Endothelial cell of umbilical vein (primary cell): ENCODE measurements at regions of chr14 and their contacts with region 1.

Region 1: DNA sequence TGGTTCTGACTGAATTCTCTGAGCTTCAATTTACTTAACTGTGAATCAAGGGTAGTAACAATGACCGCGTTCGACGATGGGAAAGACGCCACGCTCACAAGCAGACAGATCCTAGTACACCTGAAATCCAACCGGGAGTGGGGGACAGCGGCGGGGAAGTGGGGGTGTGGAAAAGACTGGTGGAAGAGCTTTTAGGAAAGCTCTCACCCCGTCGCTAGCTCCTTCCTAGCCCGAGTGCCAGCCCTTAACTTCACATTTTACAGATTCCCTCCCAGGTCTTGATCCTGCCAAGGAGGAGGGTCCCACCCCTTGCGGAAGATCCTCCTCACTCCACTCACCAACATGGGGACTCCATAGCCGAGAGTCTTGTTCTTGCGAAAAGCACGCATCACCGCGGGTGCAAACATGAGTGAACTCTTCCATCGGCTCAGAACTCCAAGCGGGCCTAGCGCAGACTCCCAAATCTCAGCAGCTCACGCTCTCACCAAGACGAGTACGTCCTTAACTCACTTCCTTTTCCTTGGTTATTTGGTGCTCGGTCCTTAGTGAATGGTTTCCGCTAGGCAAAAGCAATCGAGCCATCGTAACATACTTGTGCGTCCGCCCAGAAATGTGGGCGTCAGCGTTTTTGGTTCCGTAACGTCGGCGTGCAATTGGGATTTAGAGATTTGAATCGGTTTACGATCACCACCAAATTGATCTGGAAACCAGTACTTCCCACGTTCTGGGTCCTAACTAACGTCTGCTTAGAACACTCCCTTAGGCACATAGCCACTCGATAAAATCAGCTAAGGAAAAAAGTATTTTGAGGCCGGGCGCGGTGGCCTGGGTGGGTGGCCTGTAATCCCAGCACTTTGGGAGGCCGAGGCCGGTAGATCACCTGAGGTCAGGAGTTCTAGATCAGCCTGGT is at the start of gene COX16:
- DNase-seq: peak; percentile 96
- H3K4me3 ChIP-seq: peak within 1 kb of the TSS; percentile 46 to 93 (median 58)
- H3K27ac ChIP-seq: peak within 1 kb of the TSS; percentile 45
- H3K4me1 ChIP-seq: peaks cover 12% of the 10 kb centered on the region
- H3K27me3 ChIP-seq: no peaks in the 10 kb centered on the region
- CTCF ChIP-seq: no peak
- POLR2A ChIP-seq: peak; percentile 88
- total RNA-seq, gene COX16: 42.4 and 49.9 TPM in 2 replicates

Region 2: GRCh38 chr14:70188659-70189455 is 170.6 kb before region 1 on chr14 and contains the start of gene SLC8A3:
- CTCF ChIA-PET with region 1: no interaction called
- POLR2A ChIA-PET with region 1: no interaction called
- dilution Hi-C with region 1: no loop called
- intact Hi-C with region 1: loop called (anchors 5 kb)
- DNase-seq: peak; percentile 35
- H3K4me3 ChIP-seq: peak within 1 kb of the TSS; percentile 37 to 59 (median 51)
- H3K27ac ChIP-seq: no peak within 1 kb of the TSS
- H3K4me1 ChIP-seq: peaks cover 19% of the 10 kb centered on the region
- H3K27me3 ChIP-seq: peaks cover 18 to 30% of the 10 kb centered on the region in 2 experiments
- CTCF ChIP-seq: no peak
- POLR2A ChIP-seq: no peak
- total RNA-seq, gene SLC8A3: not detected in 2 replicates

Region 3: DNA sequence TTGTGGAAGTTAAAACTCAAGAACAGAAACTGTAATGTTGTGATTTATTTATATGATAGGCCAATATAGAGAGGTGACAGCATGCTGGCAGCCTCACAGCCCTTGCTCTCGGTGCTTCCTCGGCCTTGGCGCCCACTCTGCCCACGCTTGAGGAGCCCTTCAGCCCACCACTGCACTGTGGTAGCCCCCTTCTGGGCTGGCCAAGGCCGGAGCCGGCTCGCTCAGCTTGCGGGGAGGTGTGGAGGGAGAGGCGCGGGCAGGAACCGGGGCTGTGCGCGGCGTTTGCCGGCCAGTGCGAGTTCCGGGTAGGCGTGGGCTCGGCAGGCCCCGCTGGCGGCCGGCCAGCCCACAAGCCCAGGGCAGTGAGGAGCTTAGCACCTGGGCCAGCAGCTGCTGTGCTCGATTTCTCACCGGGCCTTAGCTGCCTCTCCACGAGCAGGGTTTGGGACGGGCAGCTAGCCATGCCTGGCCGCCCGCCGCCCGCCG is 104.9 kb before region 1 on chr14:
- CTCF ChIA-PET with region 1: no interaction called
- POLR2A ChIA-PET with region 1: no interaction called
- dilution Hi-C with region 1: no loop called
- intact Hi-C with region 1: loop called (anchors 2 kb)
- DNase-seq: peak; percentile 30
- H3K4me3 ChIP-seq: peak overlapping the region; percentile 16 to 46 (median 43)
- H3K27ac ChIP-seq: no peak overlapping the region
- H3K4me1 ChIP-seq: no peaks in the 10 kb centered on the region
- H3K27me3 ChIP-seq: peaks cover 2 to 6% of the 10 kb centered on the region in 2 experiments
- CTCF ChIP-seq: no peak
- POLR2A ChIP-seq: no peak

Region 4: DNA sequence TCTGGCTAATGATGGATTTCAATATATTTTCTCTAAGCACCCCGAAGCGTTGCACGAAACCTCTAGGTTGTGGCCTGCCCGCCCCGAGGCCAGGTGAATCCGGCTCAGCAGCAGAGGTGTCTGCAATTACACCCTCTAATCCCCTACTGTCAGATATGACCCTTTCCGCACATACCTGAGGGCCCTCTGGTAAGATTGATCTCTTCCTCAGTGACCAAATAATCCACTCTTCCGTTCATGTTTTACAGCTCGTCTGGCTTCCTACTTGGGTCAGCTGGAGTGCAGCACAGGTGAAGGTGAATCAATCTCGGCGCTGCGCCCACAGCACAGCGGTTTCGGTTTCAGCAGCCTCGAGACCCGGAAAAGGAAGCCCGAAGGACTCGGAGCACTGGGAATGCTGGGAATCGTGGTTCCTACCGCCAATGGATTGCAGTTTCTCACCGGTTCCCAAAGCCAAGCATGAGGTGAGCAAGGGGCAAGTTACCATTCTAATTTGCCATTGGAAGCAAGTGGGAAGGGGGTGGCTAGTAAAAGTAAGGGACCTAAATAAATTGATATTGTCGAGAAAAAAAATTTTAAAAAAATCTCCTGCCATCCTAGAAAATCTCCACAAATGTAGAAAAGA is 57.4 kb after region 1 on chr14 and contains the start of gene SYNJ2BP:
- CTCF ChIA-PET with region 1: no interaction called
- POLR2A ChIA-PET with region 1: no interaction called
- dilution Hi-C with region 1: no loop called
- intact Hi-C with region 1: loop called (anchors 1 kb)
- DNase-seq: peak; percentile 74
- H3K4me3 ChIP-seq: peak within 1 kb of the TSS; percentile 71 to 95 (median 92)
- H3K27ac ChIP-seq: peak within 1 kb of the TSS; percentile 45
- H3K4me1 ChIP-seq: peaks cover 5% of the 10 kb centered on the region
- H3K27me3 ChIP-seq: no peaks in the 10 kb centered on the region
- CTCF ChIP-seq: no peak
- POLR2A ChIP-seq: no peak
- total RNA-seq, gene SYNJ2BP: 26.9 and 27.7 TPM in 2 replicates